Breast epithelium (tissue), 4 donors: ENCODE measurements at regions of chr7 and their contacts with region 1.

Region 1: DNA sequence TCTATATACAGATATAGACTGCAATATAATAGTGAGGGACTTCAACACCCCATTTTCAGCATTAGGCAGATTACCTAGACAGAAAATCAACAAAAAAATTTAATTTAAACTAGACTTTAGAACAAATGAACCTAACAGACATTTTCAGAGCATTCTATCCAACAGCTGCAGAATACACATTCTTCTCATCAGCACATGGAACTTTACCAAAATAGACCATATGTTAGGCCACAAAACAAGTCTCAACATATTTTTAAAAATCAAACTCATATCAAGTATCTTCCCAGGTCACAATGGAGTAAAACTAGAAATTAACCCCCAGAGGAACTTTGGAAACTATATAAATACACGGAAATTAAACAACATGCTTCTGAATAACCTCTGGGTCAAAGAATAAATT is 169.6 kb downstream of the MTERF1 start:
- DNase-seq: no peak
- H3K4me3 ChIP-seq: no peak overlapping the region
- H3K27ac ChIP-seq: no peak overlapping the region
- H3K4me1 ChIP-seq: no peaks in the 10 kb centered on the region
- H3K27me3 ChIP-seq: no peaks in the 10 kb centered on the region
- CTCF ChIP-seq: no peak
- POLR2A ChIP-seq: no peak

Region 2: GRCh38 chr7:90298145-90299038 is 1412.5 kb before region 1 on chr7:
- intact Hi-C with region 1: loop called (anchors 5 kb)
- DNase-seq: no peak
- H3K4me3 ChIP-seq: no peak overlapping the region
- H3K27ac ChIP-seq: no peak overlapping the region
- H3K4me1 ChIP-seq: no peaks in the 10 kb centered on the region
- H3K27me3 ChIP-seq: no peaks in the 10 kb centered on the region
- CTCF ChIP-seq: peak in 2 of 3 donors; percentile 12 to 50
- POLR2A ChIP-seq: no peak

Region 3: DNA sequence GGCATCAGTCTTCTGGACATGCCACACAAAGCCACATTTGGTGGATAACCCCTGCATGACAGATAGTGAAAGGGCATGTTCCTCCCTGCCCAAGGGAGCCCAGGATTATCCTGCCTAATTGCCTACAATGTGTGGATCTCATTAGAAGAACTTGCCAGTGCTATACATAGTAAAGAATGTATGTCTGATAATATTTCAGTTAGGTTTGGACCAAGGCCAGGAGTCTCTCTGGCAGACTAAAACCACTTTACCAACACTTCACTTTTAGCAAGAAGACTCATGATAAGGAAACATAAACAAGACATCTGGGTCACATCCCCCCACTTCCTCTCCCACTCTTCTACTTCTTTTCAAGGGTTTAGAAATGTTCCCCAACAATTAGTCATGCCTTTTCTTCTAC is 27.1 kb before region 1 on chr7:
- intact Hi-C with region 1: no loop called
- DNase-seq: no peak
- H3K4me3 ChIP-seq: no peak overlapping the region
- H3K27ac ChIP-seq: no peak overlapping the region
- H3K4me1 ChIP-seq: no peaks in the 10 kb centered on the region
- H3K27me3 ChIP-seq: no peaks in the 10 kb centered on the region
- CTCF ChIP-seq: no peak
- POLR2A ChIP-seq: no peak